ENCODE measurements at regions of chr20 and their contacts with region 1.

Region 1: DNA sequence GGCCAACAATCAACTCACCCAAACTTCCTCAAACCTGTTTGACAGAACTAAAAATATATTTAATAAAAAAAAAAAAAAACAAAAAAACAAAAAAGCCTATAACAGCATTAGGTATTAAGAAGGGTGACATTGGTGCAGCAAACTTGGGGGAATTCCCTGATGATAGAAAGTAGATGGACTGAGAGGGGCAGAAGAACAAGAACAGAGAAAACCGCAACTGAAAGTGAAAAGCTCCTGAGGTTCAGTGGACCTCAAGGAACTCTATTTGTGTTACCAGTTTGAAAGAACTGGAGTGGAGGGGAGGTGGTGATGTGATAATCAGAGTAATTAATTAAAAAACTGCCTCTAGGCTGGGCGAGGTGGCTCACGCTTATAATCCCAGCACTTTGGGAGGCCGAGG is 53.8 kb downstream of the MACROD2 start:
- DNase-seq: peak; percentile 13
- CTCF ChIP-seq: no peak

Region 2: GRCh38 chr20:13800728-13801134 is 248.4 kb before region 1 on chr20:
- in situ Hi-C with region 1: no loop called
- DNase-seq: no peak
- CTCF ChIP-seq: no peak

Region 3: GRCh38 chr20:13819885-13820645 is 229.0 kb before region 1 on chr20:
- in situ Hi-C with region 1: loop called (anchors 10 kb)
- DNase-seq: peak; percentile 61
- CTCF ChIP-seq: peak; percentile 26